K562 (cell line): ENCODE measurements at regions of chr2 and their contacts with region 1.

Region 1: GRCh38 chr2:85813982-85814801 is 60.4 kb downstream of the ATOH8 start:
- DNase-seq: peak; percentile 80 to 84 (median 82)
- ATAC-seq: peak; percentile 96
- H3K4me3 ChIP-seq: no peak overlapping the region
- H3K27ac ChIP-seq: no peak overlapping the region
- H3K4me1 ChIP-seq: peaks cover 6 to 9% of the 10 kb centered on the region in 2 experiments; a peak in 4 of 5 replicates
- H3K27me3 ChIP-seq: peaks cover 20 to 54% of the 10 kb centered on the region in 2 experiments; a peak in 4 of 5 replicates
- CTCF ChIP-seq: peak; percentile 90 to 95 (median 93)
- EP300 ChIP-seq: no peak
- POLR2A ChIP-seq: no peak
- RAD21 ChIP-seq: peak; percentile 86 to 95

Region 2: GRCh38 chr2:85678794-85679672 is 135.2 kb before region 1 on chr2:
- CTCF ChIA-PET with region 1: interaction called, 3 read pairs
- POLR2A ChIA-PET with region 1: no interaction called
- in situ Hi-C with region 1: no loop called
- intact Hi-C with region 1: loop called (anchors 10 kb)
- DNase-seq: peak; percentile 80 to 93 (median 90)
- ATAC-seq: peak; percentile 98
- H3K4me3 ChIP-seq: no peak overlapping the region
- H3K27ac ChIP-seq: no peak overlapping the region
- H3K4me1 ChIP-seq: peaks cover 7 to 11% of the 10 kb centered on the region in 2 experiments; a peak in 3 of 5 replicates
- H3K27me3 ChIP-seq: peaks cover 11 to 27% of the 10 kb centered on the region in 2 experiments; a peak in 3 of 5 replicates
- CTCF ChIP-seq: peak; percentile 94 to 97 (median 94)
- EP300 ChIP-seq: no peak
- POLR2A ChIP-seq: no peak
- RAD21 ChIP-seq: peak; percentile 72 to 85

Region 3: GRCh38 chr2:85728883-85729824 is 85.0 kb before region 1 on chr2:
- CTCF ChIA-PET with region 1: interaction called, 42 read pairs
- POLR2A ChIA-PET with region 1: interaction called, 4 read pairs
- in situ Hi-C with region 1: no loop called
- intact Hi-C with region 1: loop called (anchors 1 kb)
- DNase-seq: peak; percentile 84 to 89 (median 86)
- ATAC-seq: peak; percentile 100
- H3K4me3 ChIP-seq: no peak overlapping the region
- H3K27ac ChIP-seq: no peak overlapping the region
- H3K4me1 ChIP-seq: peaks cover 0 to 4% of the 10 kb centered on the region in 2 experiments; a peak in 2 of 5 replicates
- H3K27me3 ChIP-seq: peaks cover 18 to 60% of the 10 kb centered on the region in 2 experiments
- CTCF ChIP-seq: peak; percentile 95 to 96 (median 95)
- EP300 ChIP-seq: no peak
- POLR2A ChIP-seq: no peak
- RAD21 ChIP-seq: peak; percentile 88 to 94

Region 4: DNA sequence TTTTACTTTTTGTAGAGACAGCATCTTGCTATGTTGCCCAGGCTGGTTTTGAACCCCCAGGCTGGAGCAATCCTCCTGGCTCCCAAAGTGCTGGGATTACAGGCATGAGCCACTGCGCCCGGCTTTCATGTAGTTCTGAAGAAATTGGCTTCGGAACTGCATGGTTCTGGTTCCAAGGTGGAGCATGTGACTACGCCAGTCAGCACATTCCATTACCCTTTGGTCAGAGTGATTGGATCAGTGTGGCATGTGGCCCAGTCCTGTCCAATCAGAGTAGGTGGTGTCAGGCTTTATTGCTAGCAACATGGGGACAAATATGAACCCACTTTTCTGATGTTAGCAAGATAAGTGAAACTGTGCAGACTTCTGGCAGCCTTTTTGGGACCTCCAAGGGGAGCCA is 76.7 kb before region 1 on chr2:
- CTCF ChIA-PET with region 1: no interaction called
- POLR2A ChIA-PET with region 1: interaction called, 4 read pairs
- in situ Hi-C with region 1: loop called (anchors 5 kb)
- intact Hi-C with region 1: no loop called
- DNase-seq: no peak
- ATAC-seq: peak; percentile 52; the same call in 2 of the 3 replicates
- H3K4me3 ChIP-seq: no peak overlapping the region
- H3K27ac ChIP-seq: no peak overlapping the region
- H3K4me1 ChIP-seq: peaks cover 0 to 2% of the 10 kb centered on the region in 2 experiments; a peak in 2 of 5 replicates
- H3K27me3 ChIP-seq: peaks cover 40 to 74% of the 10 kb centered on the region in 2 experiments
- CTCF ChIP-seq: no peak
- EP300 ChIP-seq: no peak
- POLR2A ChIP-seq: no peak
- RAD21 ChIP-seq: no peak

Region 5: DNA sequence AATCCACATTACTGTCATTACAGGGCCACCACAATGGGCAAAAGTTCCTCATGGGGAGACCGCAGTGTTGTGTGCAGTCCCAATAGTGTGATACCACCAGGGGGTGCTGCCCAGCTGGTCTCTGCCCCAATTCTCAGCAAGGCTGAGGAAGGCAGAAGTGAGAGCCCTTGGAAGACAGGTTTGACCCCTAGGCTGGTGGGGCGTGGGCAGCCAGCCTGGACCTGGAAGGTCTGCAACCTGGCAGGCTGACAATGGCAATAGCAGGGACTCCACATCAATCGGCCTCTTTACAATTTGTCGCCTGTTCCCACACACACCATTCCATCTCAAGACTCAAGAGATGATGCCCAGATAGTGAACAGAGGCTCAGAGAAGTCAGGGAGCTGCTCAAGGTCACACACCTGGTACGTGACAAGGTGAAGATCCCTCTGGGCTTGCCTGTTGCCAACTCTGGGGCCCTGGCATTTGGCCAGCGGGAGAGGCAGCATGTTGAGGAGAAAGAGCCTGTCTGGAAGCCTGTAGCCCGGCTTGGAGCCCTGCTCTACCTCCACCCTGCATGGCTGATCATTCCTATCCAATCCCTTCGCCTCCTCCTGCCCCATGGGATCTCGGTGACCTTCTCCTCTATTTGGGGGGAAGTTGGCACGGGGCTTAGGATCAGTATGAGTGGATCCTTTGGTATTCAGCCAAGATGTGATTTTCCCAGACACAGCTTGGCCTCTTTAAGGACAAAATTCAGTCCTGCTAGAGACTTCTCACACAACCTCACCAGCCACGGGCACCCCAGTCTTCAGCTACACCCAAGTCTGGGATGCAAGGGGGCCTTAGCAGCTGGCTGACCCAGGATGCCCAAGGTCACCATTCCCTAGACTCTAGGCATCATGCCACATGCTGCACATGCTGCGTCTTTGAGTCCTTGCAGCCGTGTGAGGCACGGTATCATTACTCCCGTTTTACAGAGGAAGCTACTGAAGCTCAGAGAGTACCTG is 63.3 kb before region 1 on chr2:
- CTCF ChIA-PET with region 1: interaction called, 3 read pairs
- POLR2A ChIA-PET with region 1: no interaction called
- in situ Hi-C with region 1: no loop called
- intact Hi-C with region 1: loop called (anchors 1 kb)
- DNase-seq: peak; percentile 55 to 71 (median 61)
- ATAC-seq: peak; percentile 89
- H3K4me3 ChIP-seq: no peak overlapping the region
- H3K27ac ChIP-seq: no peak overlapping the region
- H3K4me1 ChIP-seq: peaks cover 0 to 22% of the 10 kb centered on the region in 2 experiments; a peak in 2 of 5 replicates
- H3K27me3 ChIP-seq: peaks cover 51 to 89% of the 10 kb centered on the region in 2 experiments
- CTCF ChIP-seq: peak; percentile 77 to 84 (median 78)
- EP300 ChIP-seq: no peak
- POLR2A ChIP-seq: no peak
- RAD21 ChIP-seq: peak; percentile 56 to 84

Region 6: GRCh38 chr2:86140969-86141392 is 326.8 kb after region 1 on chr2:
- CTCF ChIA-PET with region 1: no interaction called
- POLR2A ChIA-PET with region 1: no interaction called
- in situ Hi-C with region 1: no loop called
- intact Hi-C with region 1: no loop called
- DNase-seq: no peak
- ATAC-seq: peak; percentile 32
- H3K4me3 ChIP-seq: no peak overlapping the region
- H3K27ac ChIP-seq: no peak overlapping the region
- H3K4me1 ChIP-seq: no peaks in the 10 kb centered on the region
- H3K27me3 ChIP-seq: no peaks in the 10 kb centered on the region
- CTCF ChIP-seq: no peak
- EP300 ChIP-seq: no peak
- POLR2A ChIP-seq: peak; percentile 17; the same call in 1 of the 2 replicates
- RAD21 ChIP-seq: no peak